ENCODE measurements at regions of chr15 and their contacts with region 1.

Region 1: GRCh38 chr15:60916679-60917460 is 312.2 kb downstream of the RORA start:
- DNase-seq: peak; percentile 90
- ATAC-seq: peak; percentile 95
- H3K4me3 Mint-ChIP-seq: no peak overlapping the region
- H3K27ac Mint-ChIP-seq: no peak overlapping the region
- H3K4me1 Mint-ChIP-seq: peaks cover 42% of the 10 kb centered on the region
- H3K27me3 Mint-ChIP-seq: no peaks in the 10 kb centered on the region
- CTCF ChIP-seq: peak; percentile 68; the same call in 1 of the 2 replicates

Region 2: DNA sequence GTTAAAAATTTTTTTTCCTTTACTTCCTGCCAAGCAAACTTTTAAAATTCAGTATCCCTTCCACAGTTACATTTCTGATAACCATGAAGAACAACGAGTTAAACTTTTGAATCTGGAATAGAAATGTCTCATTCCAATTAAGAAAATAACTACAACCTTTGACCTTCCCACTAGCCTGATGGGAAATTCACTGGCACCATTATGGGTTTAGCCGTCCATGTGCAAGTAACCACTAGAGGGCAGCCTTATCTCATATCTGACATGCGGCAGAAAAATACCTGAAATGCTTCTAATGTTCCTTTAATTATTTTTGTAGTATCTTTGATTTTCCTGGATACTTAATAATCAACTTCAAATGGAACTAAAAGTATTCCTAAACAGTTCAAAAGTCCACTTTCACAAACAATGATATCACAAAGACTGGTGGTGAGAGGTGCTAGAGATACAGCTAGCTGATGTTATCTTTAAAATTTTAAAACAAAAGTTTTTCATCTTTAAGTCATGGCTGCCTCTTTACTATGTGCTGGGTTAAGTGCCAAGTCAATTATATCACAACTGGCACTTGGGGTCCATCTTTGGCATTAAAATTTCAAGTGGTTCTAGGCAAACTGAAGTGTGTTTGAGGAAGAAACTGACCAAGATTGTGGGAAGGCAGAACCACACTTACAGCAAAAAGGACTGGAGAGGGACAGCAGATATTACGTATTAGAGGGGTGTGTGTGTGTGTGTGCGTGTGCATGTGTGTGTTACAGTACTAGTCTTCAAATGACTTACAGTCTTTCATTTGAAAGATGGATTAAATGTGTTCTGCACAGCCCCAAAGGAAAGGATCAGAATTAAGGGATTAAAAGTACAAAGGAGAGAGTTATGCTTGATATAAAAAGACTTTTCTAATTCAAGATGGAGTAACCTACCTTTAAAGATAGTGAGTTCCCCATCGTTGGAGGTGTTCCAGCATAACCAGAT is 330.8 kb before region 1 on chr15:
- CTCF ChIA-PET with region 1: interaction called, 45 read pairs
- POLR2A ChIA-PET with region 1: no interaction called
- DNase-seq: peak; percentile 42
- ATAC-seq: peak; percentile 51; the same call in 1 of the 2 replicates
- H3K4me3 Mint-ChIP-seq: no peak overlapping the region
- H3K27ac Mint-ChIP-seq: no peak overlapping the region
- H3K4me1 Mint-ChIP-seq: peaks cover 32% of the 10 kb centered on the region
- H3K27me3 Mint-ChIP-seq: peaks cover 23% of the 10 kb centered on the region
- CTCF ChIP-seq: peak; percentile 82

Region 3: GRCh38 chr15:60787837-60788691 is 128.8 kb before region 1 on chr15:
- CTCF ChIA-PET with region 1: interaction called, 10 read pairs
- POLR2A ChIA-PET with region 1: no interaction called
- DNase-seq: peak; percentile 40
- ATAC-seq: peak; percentile 82
- H3K4me3 Mint-ChIP-seq: no peak overlapping the region
- H3K27ac Mint-ChIP-seq: no peak overlapping the region
- H3K4me1 Mint-ChIP-seq: peaks cover 42% of the 10 kb centered on the region
- H3K27me3 Mint-ChIP-seq: no peaks in the 10 kb centered on the region
- CTCF ChIP-seq: peak; percentile 62

Region 4: DNA sequence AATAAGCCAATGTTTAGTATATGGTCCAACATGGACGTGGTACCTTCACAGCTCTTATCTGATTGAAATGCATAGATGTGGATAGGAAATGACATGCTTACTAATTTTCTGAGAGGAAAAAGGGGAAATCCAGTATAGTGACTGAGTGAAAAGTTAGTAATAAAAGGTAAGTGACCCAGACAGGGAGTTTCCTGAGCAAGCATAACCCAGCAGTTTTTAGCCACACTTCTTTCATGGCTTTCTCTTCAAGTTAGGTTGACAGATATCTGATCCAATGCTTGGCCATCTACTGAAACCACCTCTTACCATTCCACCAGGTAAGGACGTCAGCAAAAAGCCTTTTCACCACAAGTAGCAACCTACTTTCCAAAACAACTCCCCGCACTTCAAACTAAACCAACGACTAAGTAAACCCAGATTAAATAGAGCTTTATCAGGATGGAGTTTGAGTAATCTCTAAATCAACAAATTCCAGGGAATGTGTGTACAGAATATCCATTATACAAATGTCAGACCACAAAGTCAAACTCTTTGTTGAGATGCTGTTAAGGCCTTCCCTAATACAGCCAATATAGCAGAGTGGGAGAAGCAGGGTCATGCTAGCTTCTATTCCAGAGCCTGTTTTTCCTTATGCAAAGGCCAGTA is 17.4 kb before region 1 on chr15:
- CTCF ChIA-PET with region 1: interaction called, 35 read pairs
- POLR2A ChIA-PET with region 1: interaction called, 3 read pairs
- DNase-seq: no peak
- ATAC-seq: no peak
- H3K4me3 Mint-ChIP-seq: no peak overlapping the region
- H3K27ac Mint-ChIP-seq: no peak overlapping the region
- H3K4me1 Mint-ChIP-seq: peaks cover 11% of the 10 kb centered on the region
- H3K27me3 Mint-ChIP-seq: no peaks in the 10 kb centered on the region
- CTCF ChIP-seq: no peak

Region 5: GRCh38 chr15:60932051-60932915 is 15.4 kb after region 1 on chr15:
- CTCF ChIA-PET with region 1: interaction called, 60 read pairs
- POLR2A ChIA-PET with region 1: no interaction called
- DNase-seq: no peak
- ATAC-seq: peak; percentile 54; the same call in 1 of the 2 replicates
- H3K4me3 Mint-ChIP-seq: no peak overlapping the region
- H3K27ac Mint-ChIP-seq: no peak overlapping the region
- H3K4me1 Mint-ChIP-seq: peaks cover 45% of the 10 kb centered on the region
- H3K27me3 Mint-ChIP-seq: no peaks in the 10 kb centered on the region
- CTCF ChIP-seq: no peak

Measured in WTC11 (cell line).